A549 (cell line): ENCODE measurements at regions of chr11 and their contacts with region 1.

Region 1: DNA sequence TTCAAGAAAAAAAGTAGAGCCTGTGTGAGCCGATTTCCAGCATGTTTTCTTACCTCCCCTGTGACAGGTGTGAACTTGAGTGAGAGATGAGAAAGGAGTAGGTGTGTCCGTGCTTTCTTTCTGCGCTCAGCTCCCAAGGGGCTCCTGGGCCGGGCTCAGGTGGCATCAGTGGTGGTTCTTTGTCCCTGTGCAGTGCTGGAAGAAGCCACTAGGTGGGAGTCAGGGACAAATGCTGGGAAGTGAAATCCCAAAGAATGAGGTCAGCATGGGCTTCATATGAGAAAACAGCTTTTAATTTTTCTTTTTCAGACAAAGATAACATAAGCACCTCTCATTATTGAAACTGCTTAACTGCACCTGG is 57.8 kb downstream of the PPFIBP2 start:
- DNase-seq: peak; percentile 74 to 79
- ATAC-seq: peak; percentile 75 to 83
- H3K4me3 ChIP-seq: no peak overlapping the region
- H3K27ac ChIP-seq: peak overlapping the region; percentile 85 to 88
- H3K4me1 ChIP-seq: peaks cover 56% of the 10 kb centered on the region
- CTCF ChIP-seq: peak; percentile 98
- EP300 ChIP-seq: no peak
- POLR2A ChIP-seq: no peak
- RAD21 ChIP-seq: peak; percentile 98 to 99

Region 2: GRCh38 chr11:7513234-7514098 is 58.2 kb before region 1 on chr11 and contains the start of gene PPFIBP2:
- CTCF ChIA-PET with region 1: interaction called, 26 read pairs
- POLR2A ChIA-PET with region 1: no interaction called
- DNase-seq: peak; percentile 73 to 90
- ATAC-seq: peak; percentile 92 to 96
- H3K4me3 ChIP-seq: peak within 1 kb of the TSS; percentile 76
- H3K27ac ChIP-seq: peak within 1 kb of the TSS; percentile 75 to 92
- H3K4me1 ChIP-seq: 0 out of 3 replicates have a peak, but pooled peaks cover 6% of the 10 kb centered on the region
- CTCF ChIP-seq: peak; percentile 90
- EP300 ChIP-seq: no peak
- POLR2A ChIP-seq: no peak
- RAD21 ChIP-seq: peak; percentile 71 to 79
- polyA plus RNA-seq, gene PPFIBP2: 32.5 and 58.4 TPM in 2 replicates

Region 3: GRCh38 chr11:7548659-7549274 is 22.9 kb before region 1 on chr11:
- CTCF ChIA-PET with region 1: interaction called, 29 read pairs
- POLR2A ChIA-PET with region 1: no interaction called
- DNase-seq: peak in 1 of 2 experiments; percentile 27
- ATAC-seq: peak; percentile 67 to 92; a peak in 5 of 6 replicates
- H3K4me3 ChIP-seq: no peak overlapping the region
- H3K27ac ChIP-seq: no peak overlapping the region
- H3K4me1 ChIP-seq: peaks cover 10% of the 10 kb centered on the region; the same call in 1 of the 3 replicates
- CTCF ChIP-seq: peak; percentile 22; the same call in 1 of the 3 replicates
- EP300 ChIP-seq: no peak
- POLR2A ChIP-seq: no peak
- RAD21 ChIP-seq: peak in 1 of 2 experiments; percentile 25; a peak in 2 of 5 replicates

Region 4: GRCh38 chr11:7600205-7600775 is 28.7 kb after region 1 on chr11:
- CTCF ChIA-PET with region 1: interaction called, 45 read pairs
- POLR2A ChIA-PET with region 1: interaction called, 4 read pairs
- DNase-seq: peak; percentile 22 to 83
- ATAC-seq: peak; percentile 84 to 87
- H3K4me3 ChIP-seq: no peak overlapping the region
- H3K27ac ChIP-seq: peak overlapping the region; percentile 76 to 92
- H3K4me1 ChIP-seq: peaks cover 68% of the 10 kb centered on the region
- CTCF ChIP-seq: no peak
- EP300 ChIP-seq: no peak
- POLR2A ChIP-seq: no peak
- RAD21 ChIP-seq: 0 out of 5 replicates have a peak, but pooled peaks of 1 of the 2 experiments have one; percentile 19

Region 5: GRCh38 chr11:7630002-7630401 is 58.4 kb after region 1 on chr11:
- CTCF ChIA-PET with region 1: interaction called, 16 read pairs
- POLR2A ChIA-PET with region 1: no interaction called
- DNase-seq: no peak
- ATAC-seq: no peak
- H3K4me3 ChIP-seq: no peak overlapping the region
- H3K27ac ChIP-seq: no peak overlapping the region
- H3K4me1 ChIP-seq: no peaks in the 10 kb centered on the region
- CTCF ChIP-seq: no peak
- EP300 ChIP-seq: no peak
- POLR2A ChIP-seq: no peak
- RAD21 ChIP-seq: no peak

Region 6: GRCh38 chr11:7657306-7658025 is 85.8 kb after region 1 on chr11:
- CTCF ChIA-PET with region 1: interaction called, 290 read pairs
- POLR2A ChIA-PET with region 1: interaction called, 14 read pairs
- DNase-seq: peak; percentile 49 to 77
- ATAC-seq: peak; percentile 90 to 96
- H3K4me3 ChIP-seq: no peak overlapping the region
- H3K27ac ChIP-seq: peak overlapping the region in 1 of 2 experiments; percentile 74; a peak in 3 of 6 replicates
- H3K4me1 ChIP-seq: peaks cover 5% of the 10 kb centered on the region; the same call in 2 of the 3 replicates
- CTCF ChIP-seq: peak; percentile 81
- EP300 ChIP-seq: no peak
- POLR2A ChIP-seq: no peak
- RAD21 ChIP-seq: peak; percentile 93 to 95

Region 7: DNA sequence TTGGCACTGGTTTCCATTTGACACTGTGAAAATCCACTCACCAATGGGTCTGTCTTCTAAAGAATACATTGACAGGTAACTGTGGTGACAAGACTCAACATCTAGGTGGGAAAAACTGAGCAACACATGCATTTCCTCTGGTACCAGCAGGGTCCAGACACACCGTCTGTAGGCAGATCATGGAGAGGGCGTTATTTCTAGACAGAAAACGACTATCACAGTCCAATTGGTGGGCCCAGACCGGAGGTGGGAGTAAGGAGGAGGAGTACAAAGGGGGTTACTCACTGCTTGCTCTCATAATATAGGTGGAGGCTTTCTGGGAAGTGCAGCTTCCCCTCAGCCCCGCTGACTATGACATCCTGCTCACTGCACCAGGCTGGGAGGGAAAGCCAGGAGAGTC is 124.8 kb after region 1 on chr11:
- CTCF ChIA-PET with region 1: interaction called, 10 read pairs
- POLR2A ChIA-PET with region 1: no interaction called
- DNase-seq: no peak
- ATAC-seq: no peak
- H3K4me3 ChIP-seq: no peak overlapping the region
- H3K27ac ChIP-seq: no peak overlapping the region
- H3K4me1 ChIP-seq: no peaks in the 10 kb centered on the region
- CTCF ChIP-seq: no peak
- EP300 ChIP-seq: no peak
- POLR2A ChIP-seq: no peak
- RAD21 ChIP-seq: no peak